ENCODE measurements at regions of chr7 and their contacts with region 1.

Region 1: GRCh38 chr7:51315393-51316261 is 982 bp downstream of the COBL start:
- DNase-seq: peak in 8 of 10 donors; percentile 46 to 91 (median 70)

Region 2: DNA sequence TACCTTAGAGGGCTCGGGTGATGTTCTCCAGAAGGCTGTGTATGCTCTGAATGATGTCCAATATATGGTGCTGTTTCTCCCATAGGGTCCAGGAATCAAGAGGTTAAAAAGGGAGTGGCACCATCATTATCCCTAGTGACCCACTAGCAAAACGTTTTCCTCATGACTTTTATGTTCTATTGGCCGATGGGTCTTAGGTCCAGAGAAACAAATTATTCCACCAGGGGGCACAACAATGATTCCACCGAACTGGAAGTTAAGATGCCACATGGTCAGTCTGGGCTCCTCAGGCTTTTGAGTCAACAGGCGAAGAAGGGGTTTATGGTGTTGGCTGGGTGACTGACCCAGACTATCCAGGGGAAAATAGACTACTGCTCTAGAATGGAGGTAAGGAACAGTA is 255.1 kb before region 1 on chr7:
- intact Hi-C with region 1: no loop called
- DNase-seq: no peak

Region 3: DNA sequence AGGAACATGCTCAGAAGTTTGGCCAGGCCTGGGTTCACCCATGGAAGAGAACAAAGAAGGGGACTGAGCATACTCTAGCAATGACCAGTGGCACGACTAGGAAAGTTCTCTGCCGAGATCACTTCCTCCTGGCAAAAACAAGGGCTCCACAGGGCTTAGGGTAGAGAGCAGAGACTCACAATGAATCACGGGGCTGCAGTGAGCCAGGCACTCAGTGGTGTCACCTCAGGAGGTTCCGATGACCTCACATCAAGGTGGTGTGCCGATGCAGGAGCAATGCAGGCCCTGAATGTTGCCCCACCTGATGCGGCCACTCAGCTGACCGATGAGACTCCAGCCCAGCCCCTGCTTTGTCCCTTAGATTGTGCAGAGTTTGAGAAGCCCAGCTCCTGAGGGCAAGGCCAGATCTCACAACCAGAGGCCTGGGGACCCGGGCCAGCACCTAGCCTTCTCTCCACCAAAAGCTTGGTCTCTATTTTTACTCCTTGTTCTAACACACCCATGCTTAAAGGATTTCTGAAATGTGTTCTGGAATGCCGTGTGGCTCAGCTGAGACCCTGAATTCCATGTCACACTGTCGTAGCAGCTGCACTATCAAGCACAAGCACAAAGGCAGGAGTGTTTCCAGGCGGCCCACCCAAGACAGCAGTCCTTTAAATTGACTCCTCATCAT is 60.0 kb before region 1 on chr7:
- intact Hi-C with region 1: loop called (anchors 10 kb)
- DNase-seq: no peak

Region 4: GRCh38 chr7:51268859-51269258 is 46.8 kb before region 1 on chr7:
- intact Hi-C with region 1: no loop called
- DNase-seq: peak in 4 of 10 donors; percentile 52 to 95 (median 66)

Region 5: DNA sequence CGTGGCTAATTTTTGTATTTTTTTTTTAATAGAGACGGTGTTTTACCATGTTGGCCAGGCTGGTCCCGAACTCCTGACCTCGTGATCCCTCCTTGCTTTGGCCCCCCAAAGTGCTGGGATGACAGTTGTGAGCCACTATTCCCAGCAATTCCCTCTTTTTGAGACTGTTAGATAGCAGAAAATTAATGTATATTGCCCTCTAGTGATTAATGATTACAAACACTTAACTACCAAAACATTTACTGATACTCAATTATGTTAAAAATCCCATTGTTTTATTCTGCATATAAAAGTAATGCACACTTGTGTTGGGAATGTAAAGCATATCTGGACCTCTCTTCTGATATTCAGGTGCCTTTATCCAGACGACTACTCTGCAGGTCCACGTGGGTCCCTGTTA is 42.2 kb after region 1 on chr7:
- intact Hi-C with region 1: loop called (anchors 5 kb)
- DNase-seq: no peak

Measured in posterior cingulate gyrus (tissue), 11 donors.